Heart left ventricle (tissue), 16 donors: ENCODE measurements at regions of chr12 and their contacts with region 1.

Region 1: DNA sequence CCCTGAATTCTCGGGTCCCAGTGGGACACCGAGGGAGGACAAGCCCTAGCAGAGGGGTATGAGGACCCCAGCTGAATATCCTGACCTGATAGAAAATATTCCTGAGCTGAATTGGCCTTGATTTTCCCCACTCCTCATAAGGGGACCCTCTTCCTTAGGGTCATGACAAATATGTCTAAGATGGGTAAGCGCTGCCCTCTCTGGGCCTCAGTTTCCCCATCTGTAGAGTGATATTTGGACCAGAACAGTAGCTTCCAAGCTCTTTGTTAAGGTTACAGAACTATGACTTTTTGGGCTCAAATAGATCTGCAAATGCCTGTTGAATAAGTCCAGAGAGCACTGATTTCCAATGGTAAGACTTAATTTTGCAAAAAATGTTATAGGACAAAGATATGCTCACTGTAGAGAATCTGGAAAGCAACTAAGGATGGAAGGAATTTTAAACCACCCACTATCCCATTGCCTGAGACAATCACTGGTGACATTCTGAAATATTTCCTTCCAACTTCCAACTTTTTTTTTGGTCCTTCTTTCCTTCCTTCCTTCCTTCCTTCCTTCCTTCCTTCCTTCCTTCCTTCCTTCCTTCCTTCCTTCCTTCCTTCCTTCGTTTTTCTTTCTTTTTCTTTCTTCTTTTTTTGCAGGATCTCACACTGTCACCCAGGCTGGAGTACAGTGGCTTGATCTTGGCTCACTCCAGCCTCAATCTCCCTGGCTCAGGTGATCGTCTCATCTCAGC is 32.0 kb downstream of the MYL2 start:
- DNase-seq: no peak
- ATAC-seq: peak in 1 of 4 donors; percentile 6
- H3K4me3 ChIP-seq: peak overlapping the region in 5 of 12 donors; percentile 44 to 64 (median 61)
- H3K27ac ChIP-seq: peak overlapping the region in 2 of 12 donors; percentile 65 to 70
- H3K4me1 ChIP-seq: peaks cover 0 to 11% (median 0%) of the 10 kb centered on the region in 12 donors
- H3K27me3 ChIP-seq: no peaks in the 10 kb centered on the region
- CTCF ChIP-seq: peak in 4 of 12 donors; percentile 3 to 25 (median 14)
- POLR2A ChIP-seq: no peak

Region 2: DNA sequence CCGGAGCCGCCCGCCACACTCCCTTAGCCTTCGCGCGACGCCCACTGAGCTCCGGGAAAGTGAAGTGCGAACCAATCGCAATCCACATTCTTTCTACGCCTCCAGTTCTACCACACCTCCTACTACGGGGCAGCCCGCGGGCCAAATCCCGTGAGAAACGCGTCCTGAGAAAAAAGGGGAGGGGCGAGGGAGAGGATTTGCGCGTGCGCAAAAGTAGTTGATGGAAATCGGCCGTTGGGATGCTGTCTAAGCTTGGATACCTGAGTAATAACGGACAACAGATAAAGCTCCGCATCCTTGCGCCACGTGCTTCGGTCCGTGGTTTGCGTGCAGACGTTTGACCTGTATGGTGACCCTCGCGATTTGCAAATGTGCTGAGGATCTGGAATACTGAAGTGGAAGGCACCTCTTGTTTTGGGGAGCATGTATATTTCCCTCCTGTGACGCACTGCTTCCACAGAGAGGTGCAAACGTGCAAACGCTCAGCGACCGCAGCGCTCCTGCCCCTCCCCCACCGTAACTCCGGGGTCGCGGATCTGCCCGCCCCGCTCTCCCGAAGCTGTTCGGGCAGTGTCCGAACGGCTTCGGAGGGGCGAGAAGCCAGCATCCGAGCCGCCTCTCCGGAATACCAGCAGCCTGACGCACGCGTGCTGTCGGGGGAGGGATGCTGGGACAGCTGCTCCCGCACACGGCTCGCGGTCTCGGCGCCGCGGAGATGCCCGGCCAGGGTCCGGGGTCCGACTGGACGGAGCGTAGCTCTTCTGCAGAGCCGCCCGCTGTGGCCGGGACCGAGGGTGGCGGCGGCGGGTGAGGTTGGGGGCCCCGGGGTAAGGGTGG is 420.0 kb before region 1 on chr12 and contains the starts of genes FAM216A and GPN3:
- intact Hi-C with region 1: loop called in 1 of 10 experiments (anchors 5 kb)
- DNase-seq: peak; percentile 96 to 98 (median 97)
- ATAC-seq: peak; percentile 95 to 97 (median 96)
- H3K4me3 ChIP-seq: peak within 1 kb of the TSS; percentile 59 to 97 (median 78)
- H3K27ac ChIP-seq: peak within 1 kb of the TSS in 11 of 12 donors; percentile 83 to 97 (median 87)
- H3K4me1 ChIP-seq: peaks cover 0 to 30% (median 16%) of the 10 kb centered on the region in 12 donors
- H3K27me3 ChIP-seq: no peaks in the 10 kb centered on the region
- CTCF ChIP-seq: no peak
- POLR2A ChIP-seq: peak in 1 of 2 donors; percentile 66
- total RNA-seq, gene FAM216A: 3.6 to 8.0 (median 4.7) TPM
- total RNA-seq, gene GPN3: 14.5 to 37.0 (median 28.4) TPM

Region 3: DNA sequence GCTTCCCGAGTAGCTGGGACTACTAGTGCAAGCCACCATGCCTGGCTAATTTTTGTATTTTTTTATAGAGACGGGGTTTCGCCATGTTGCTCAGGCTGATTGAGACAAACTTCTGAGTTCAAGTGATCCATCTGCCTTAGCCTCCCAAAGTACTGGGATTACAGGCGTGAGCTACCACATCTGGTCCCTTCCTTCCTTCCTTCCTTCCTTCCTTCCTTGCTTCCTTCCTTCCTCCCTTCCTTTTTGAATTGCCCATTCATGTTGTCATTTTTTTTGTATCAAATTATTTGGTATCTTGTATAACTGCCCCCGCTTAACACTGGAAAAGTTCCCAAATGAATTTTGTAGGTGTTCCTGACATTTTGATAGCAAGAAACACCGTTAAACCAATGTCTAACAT is 374.6 kb before region 1 on chr12:
- intact Hi-C with region 1: loop called in 7 of 10 experiments (anchors 2 to 10 kb)
- DNase-seq: no peak
- ATAC-seq: no peak
- H3K4me3 ChIP-seq: no peak overlapping the region
- H3K27ac ChIP-seq: no peak overlapping the region
- H3K4me1 ChIP-seq: peaks cover 0 to 4% (median 0%) of the 10 kb centered on the region in 12 donors
- H3K27me3 ChIP-seq: no peaks in the 10 kb centered on the region
- CTCF ChIP-seq: no peak
- POLR2A ChIP-seq: no peak

Region 4: GRCh38 chr12:110627500-110628195 is 260.8 kb before region 1 on chr12:
- intact Hi-C with region 1: loop called in 1 of 10 experiments (anchors 10 kb)
- DNase-seq: no peak
- ATAC-seq: no peak
- H3K4me3 ChIP-seq: no peak overlapping the region
- H3K27ac ChIP-seq: no peak overlapping the region
- H3K4me1 ChIP-seq: peaks cover 0 to 6% (median 0%) of the 10 kb centered on the region in 12 donors
- H3K27me3 ChIP-seq: no peaks in the 10 kb centered on the region
- CTCF ChIP-seq: no peak
- POLR2A ChIP-seq: no peak

Region 5: DNA sequence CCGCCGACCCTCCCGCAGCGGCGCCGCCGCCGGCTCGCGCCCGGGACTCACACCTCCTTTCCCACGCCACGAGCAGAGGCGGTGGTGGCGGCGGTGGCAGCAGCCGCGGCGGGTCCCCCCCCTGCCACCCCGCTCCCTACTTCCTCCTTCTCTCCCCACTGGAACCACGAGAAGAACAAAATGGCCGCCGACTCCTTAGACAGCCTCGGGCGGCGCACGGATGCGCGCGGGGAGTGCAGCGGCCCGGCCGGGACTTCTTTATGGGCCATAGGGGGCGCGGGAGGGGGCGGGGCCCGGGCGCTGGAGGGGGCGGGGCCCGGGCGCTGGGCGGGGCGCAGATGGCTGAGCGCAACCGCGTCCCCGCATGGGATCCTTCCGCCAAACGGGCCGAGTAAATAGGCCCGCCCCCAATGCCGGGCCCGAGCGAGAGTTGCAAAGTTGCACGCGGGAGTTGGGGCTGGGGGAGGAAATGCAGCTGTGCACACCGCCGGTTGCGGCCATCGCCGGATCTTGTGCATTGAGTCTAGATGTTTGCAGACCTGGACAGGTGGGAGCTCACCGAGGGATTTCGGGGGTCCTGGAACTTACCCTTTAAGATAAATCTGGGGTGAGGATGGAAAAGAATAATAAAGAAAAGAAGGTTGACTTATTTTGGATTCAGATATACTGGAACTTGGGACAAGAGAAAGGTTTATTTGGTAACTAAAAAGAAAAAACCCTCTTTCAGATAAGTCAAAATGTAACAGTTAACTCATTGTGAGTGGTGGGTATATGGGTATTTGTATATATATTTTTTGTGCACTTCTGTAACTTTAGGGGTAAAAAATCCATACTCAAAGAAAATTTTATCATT is 145.5 kb before region 1 on chr12 and contains the start of gene PPP1CC:
- intact Hi-C with region 1: loop called in 2 of 10 experiments (anchors 5 to 10 kb)
- DNase-seq: peak; percentile 94 to 97 (median 96)
- ATAC-seq: peak; percentile 86 to 96 (median 94)
- H3K4me3 ChIP-seq: peak within 1 kb of the TSS; percentile 64 to 100 (median 97)
- H3K27ac ChIP-seq: peak within 1 kb of the TSS; percentile 83 to 97 (median 94)
- H3K4me1 ChIP-seq: peaks cover 2 to 66% (median 46%) of the 10 kb centered on the region in 12 donors
- H3K27me3 ChIP-seq: no peaks in the 10 kb centered on the region
- CTCF ChIP-seq: peak in 3 of 12 donors; percentile 10 to 40 (median 21)
- POLR2A ChIP-seq: peak in 1 of 2 donors; percentile 79
- total RNA-seq, gene PPP1CC: 110 to 207 (median 150) TPM